Activated T-helper 2 cell treated with anti-CD3 and anti-CD28 coated beads, Interferon-gamma antibody, Interleukin-2, Interleukin-4, amounts not matched to agents 10 μg/mL and 5 μg/mL and 100 μg/mL, durations not matched to agents 14 hours and 24 hours and 36 hours (primary cell): ENCODE measurements at regions of chr13 and their contacts with region 1.

Region 1: DNA sequence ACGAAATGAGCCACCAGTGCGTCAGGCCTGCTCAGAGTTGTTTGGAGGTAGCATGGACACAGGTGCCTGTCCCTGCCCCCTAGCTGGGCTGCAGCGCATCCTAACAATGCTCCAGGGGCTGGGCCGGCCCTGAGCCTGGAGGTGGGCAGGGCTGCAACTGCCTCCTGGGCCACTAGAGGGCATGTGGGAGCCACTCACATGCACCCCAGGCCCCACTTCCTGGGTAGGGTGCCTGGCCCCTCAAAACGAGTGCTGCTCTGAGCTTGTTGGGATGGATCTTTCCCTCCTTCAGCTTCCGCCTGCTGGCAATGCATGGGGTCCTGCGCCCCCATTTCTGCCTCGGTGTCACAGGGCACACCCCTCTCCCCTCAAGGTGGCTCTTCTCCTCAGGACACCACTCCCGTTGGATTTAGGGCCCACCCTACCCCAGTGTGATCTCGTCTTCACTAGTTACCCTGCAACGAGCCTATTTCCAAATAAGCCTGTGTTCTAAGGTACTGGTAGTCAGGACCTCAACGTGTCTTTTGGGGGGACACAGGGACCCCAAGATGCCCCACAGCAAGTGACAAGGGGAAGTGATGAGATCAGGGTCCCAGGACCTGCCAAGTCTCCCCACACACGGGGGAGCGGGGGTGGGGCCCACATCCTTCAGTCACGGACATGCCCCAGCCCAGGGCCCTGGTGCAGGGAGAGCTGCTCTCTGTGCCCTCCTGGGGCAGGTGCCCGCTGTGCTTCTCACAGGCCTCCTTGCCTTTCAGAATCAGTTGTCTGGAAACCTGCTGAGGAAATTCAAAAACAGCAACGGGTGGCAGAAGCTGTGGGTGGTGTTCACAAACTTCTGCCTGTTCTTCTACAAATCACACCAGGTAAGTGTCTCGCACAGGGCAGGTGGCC is 131.3 kb downstream of the STK24 start:
- DNase-seq: peak; percentile 63
- H3K4me3 Mint-ChIP-seq: no peak overlapping the region
- H3K27ac Mint-ChIP-seq: peak overlapping the region; percentile 53
- H3K4me1 Mint-ChIP-seq: peaks cover 6% of the 10 kb centered on the region
- H3K27me3 Mint-ChIP-seq: no peaks in the 10 kb centered on the region

Region 2: GRCh38 chr13:98653463-98653985 is 207.9 kb after region 1 on chr13:
- intact Hi-C with region 1: loop called (anchors 1 kb)
- DNase-seq: peak; percentile 51
- H3K4me3 Mint-ChIP-seq: no peak overlapping the region
- H3K27ac Mint-ChIP-seq: no peak overlapping the region
- H3K4me1 Mint-ChIP-seq: peaks cover 2% of the 10 kb centered on the region
- H3K27me3 Mint-ChIP-seq: no peaks in the 10 kb centered on the region

Region 3: GRCh38 chr13:98672944-98673545 is 227.5 kb after region 1 on chr13:
- intact Hi-C with region 1: loop called (anchors 1 kb)
- DNase-seq: peak; percentile 23
- H3K4me3 Mint-ChIP-seq: no peak overlapping the region
- H3K27ac Mint-ChIP-seq: no peak overlapping the region
- H3K4me1 Mint-ChIP-seq: no peaks in the 10 kb centered on the region
- H3K27me3 Mint-ChIP-seq: peaks cover 14% of the 10 kb centered on the region

Region 4: DNA sequence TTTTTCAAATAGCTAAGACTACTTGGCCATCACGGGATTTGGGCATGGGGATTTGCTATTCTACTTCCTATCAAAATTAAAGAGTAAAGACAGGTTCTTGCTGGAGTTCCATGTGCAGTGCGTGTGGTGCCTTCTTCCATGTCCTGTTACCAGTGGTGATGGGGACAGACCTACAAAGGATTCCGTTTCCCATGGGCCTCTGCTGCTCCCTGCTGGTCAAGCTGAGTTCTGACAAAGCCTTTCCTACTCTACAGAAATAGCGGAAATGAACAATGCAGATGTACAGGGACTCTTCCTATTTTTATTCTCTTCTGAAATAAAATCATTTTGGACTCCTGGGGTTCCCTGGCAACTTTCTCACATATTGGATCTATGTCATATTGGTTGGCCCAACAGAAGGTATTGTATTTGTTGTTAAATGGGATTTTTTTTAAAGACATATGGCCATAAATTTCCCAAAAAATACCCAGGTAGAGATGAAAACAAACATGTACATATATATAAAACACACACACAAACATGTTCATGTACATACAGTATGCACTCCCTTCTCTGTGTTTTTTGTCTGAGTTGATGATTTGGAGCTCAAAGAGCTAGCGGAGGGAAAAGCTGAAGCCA is 397.4 kb after region 1 on chr13:
- intact Hi-C with region 1: loop called (anchors 10 kb)
- DNase-seq: peak; percentile 48
- H3K4me3 Mint-ChIP-seq: no peak overlapping the region
- H3K27ac Mint-ChIP-seq: no peak overlapping the region
- H3K4me1 Mint-ChIP-seq: peaks cover 5% of the 10 kb centered on the region
- H3K27me3 Mint-ChIP-seq: no peaks in the 10 kb centered on the region